Kidney (tissue), 22 donors: ENCODE measurements at regions of chr11 and their contacts with region 1.

Region 1: GRCh38 chr11:10735481-10736475 is 15.3 kb upstream of the CTR9 start:
- DNase-seq: peak; percentile 94 to 98 (median 96)
- H3K4me3 ChIP-seq: peak overlapping the region; percentile 28 to 42 (median 31)
- H3K27ac ChIP-seq: no peak overlapping the region
- H3K4me1 ChIP-seq: peaks cover 0 to 3% (median 0%) of the 10 kb centered on the region in 3 donors
- H3K27me3 ChIP-seq: no peaks in the 10 kb centered on the region
- CTCF ChIP-seq: peak; percentile 88

Region 2: GRCh38 chr11:10122326-10123197 is 613.2 kb before region 1 on chr11:
- intact Hi-C with region 1: no loop called
- DNase-seq: no peak
- H3K4me3 ChIP-seq: peak overlapping the region in 1 of 3 donors; percentile 13
- H3K27ac ChIP-seq: no peak overlapping the region
- H3K4me1 ChIP-seq: peaks cover 0 to 2% (median 0%) of the 10 kb centered on the region in 3 donors
- H3K27me3 ChIP-seq: no peaks in the 10 kb centered on the region
- CTCF ChIP-seq: no peak

Region 3: DNA sequence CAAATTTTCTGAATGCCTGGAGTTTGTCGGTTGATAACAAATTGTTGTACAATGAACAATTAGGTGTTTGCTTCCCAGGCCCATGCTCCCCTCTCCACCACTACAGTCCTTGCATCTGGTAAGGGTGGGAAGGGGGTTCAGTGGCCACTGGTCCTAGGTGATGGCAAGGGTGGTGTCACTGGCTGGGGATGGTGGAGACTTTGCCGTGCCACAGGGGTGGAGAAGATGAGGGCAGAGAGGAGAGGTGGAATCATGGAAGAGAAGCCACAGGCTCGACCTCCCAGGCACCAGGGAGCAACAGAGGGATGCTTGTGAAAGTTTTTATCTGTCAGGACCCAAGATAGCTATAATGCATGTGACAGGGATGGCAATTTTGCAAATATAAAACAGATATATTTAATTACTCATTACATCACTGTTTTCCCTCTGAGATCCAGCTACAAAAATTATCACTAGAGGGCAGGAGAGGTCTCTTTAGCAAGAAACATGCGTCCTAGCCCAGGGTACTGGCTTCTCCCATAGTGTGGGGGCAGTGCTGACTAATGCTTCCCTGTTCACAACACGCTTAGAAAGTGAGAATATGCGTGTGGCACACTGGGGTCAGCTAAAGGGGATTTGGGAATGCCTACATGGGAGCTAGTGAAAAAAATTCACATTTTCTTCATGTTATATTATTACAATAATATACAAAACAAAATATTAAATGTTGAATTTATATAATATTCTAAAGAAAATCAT is 329.8 kb before region 1 on chr11:
- intact Hi-C with region 1: loop called (anchors 5 kb)
- DNase-seq: peak in 4 of 5 donors; percentile 74 to 93 (median 84)
- H3K4me3 ChIP-seq: no peak overlapping the region
- H3K27ac ChIP-seq: no peak overlapping the region
- H3K4me1 ChIP-seq: peaks cover 0 to 4% (median 0%) of the 10 kb centered on the region in 3 donors
- H3K27me3 ChIP-seq: no peaks in the 10 kb centered on the region
- CTCF ChIP-seq: peak; percentile 68

Region 4: DNA sequence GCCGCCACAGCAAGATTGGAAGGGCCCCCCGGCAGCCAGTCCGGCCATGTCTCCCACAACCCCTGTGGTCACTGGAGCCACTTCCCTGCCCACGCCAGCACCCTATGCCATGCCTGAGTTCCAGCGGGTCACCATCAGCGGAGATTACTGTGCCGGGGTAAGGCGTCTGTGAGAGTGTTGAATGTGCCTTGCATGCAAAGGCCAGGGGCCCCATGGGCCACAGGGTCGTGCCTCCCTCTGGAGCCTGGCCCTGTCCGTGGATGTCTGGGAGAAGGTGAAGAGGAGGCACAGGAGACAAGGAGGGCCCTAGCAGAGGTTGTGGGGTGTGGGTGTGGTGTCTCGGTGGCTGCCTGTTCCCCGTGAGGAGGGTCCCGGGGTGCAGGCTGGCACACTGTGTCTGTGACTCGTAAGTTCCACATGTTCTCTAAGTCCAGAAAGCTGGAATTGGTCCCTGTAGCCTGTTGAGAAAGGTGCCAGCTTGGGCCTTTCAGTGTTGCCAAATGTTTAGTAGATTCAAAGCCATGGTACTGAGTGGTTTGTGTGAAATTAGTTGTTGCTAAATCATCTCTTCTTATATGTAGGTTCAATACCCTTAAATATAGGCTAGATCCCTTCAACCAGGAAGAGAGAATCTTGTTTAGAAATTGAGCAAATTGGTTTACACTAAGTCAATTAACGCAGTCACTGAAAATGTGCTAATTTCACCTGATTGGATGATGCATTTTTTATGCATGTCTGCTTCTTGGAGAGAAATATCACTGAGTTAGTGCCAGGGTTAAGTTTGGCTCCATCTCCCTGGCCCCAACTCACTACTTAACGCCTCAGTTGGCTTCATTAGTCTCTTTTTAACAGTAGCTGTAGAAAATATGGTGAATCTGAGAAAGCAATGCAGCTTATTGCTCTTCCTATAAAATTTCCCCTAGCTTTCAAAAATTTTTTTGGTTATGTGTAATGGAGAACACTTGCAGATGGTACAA is 256.9 kb before region 1 on chr11:
- intact Hi-C with region 1: no loop called
- DNase-seq: no peak
- H3K4me3 ChIP-seq: no peak overlapping the region
- H3K27ac ChIP-seq: no peak overlapping the region
- H3K4me1 ChIP-seq: no peaks in the 10 kb centered on the region
- H3K27me3 ChIP-seq: no peaks in the 10 kb centered on the region
- CTCF ChIP-seq: no peak